ENCODE measurements at regions of chr13 and their contacts with region 1.

Region 1: GRCh38 chr13:28718543-28719226 is at the start of gene SLC46A3:
- DNase-seq: peak; percentile 98
- H3K4me3 ChIP-seq: peak within 1 kb of the TSS; percentile 78 to 89 (median 80)
- H3K4me3 Mint-ChIP-seq: peak within 1 kb of the TSS; percentile 87 to 98
- H3K27ac ChIP-seq: peak within 1 kb of the TSS; percentile 97 to 100
- H3K27ac Mint-ChIP-seq: peak within 1 kb of the TSS; percentile 91 to 98 (median 97)
- H3K4me1 ChIP-seq: peaks cover 24 to 27% of the 10 kb centered on the region in 2 donors
- H3K4me1 Mint-ChIP-seq: peaks cover 27% of the 10 kb centered on the region
- H3K27me3 ChIP-seq: no peaks in the 10 kb centered on the region
- H3K27me3 Mint-ChIP-seq: peaks cover 2 to 5% (median 3%) of the 10 kb centered on the region in 3 donors
- CTCF ChIP-seq: no peak
- polyA plus RNA-seq, gene SLC46A3: 8.2 to 21.1 (median 13.8) TPM

Region 2: GRCh38 chr13:28658796-28659620 is 59.7 kb before region 1 on chr13 and contains the start of gene POMP:
- intact Hi-C with region 1: loop called in 1 of 2 experiments (anchors 10 kb)
- DNase-seq: peak; percentile 81 to 89 (median 82)
- H3K4me3 ChIP-seq: peak within 1 kb of the TSS; percentile 96 to 98 (median 97)
- H3K4me3 Mint-ChIP-seq: peak within 1 kb of the TSS; percentile 96 to 97
- H3K27ac ChIP-seq: peak within 1 kb of the TSS; percentile 91 to 96
- H3K27ac Mint-ChIP-seq: peak within 1 kb of the TSS; percentile 97 to 99 (median 98)
- H3K4me1 ChIP-seq: peaks cover 32 to 34% of the 10 kb centered on the region in 2 donors
- H3K4me1 Mint-ChIP-seq: peaks cover 40% of the 10 kb centered on the region
- H3K27me3 ChIP-seq: no peaks in the 10 kb centered on the region
- H3K27me3 Mint-ChIP-seq: no peaks in the 10 kb centered on the region
- CTCF ChIP-seq: no peak
- polyA plus RNA-seq, gene POMP: 31.3 to 153 (median 145) TPM

Region 3: GRCh38 chr13:28671126-28671792 is 47.4 kb before region 1 on chr13:
- intact Hi-C with region 1: loop called in 1 of 2 experiments (anchors 5 kb)
- DNase-seq: peak; percentile 23 to 61 (median 38)
- H3K4me3 ChIP-seq: peak overlapping the region in 1 of 3 experiments; percentile 56
- H3K4me3 Mint-ChIP-seq: peak overlapping the region in 1 of 2 donors; percentile 59
- H3K27ac ChIP-seq: peak overlapping the region; percentile 55 to 75
- H3K27ac Mint-ChIP-seq: peak overlapping the region; percentile 82 to 96 (median 92)
- H3K4me1 ChIP-seq: peaks cover 32 to 41% of the 10 kb centered on the region in 2 donors
- H3K4me1 Mint-ChIP-seq: peaks cover 38% of the 10 kb centered on the region
- H3K27me3 ChIP-seq: no peaks in the 10 kb centered on the region
- H3K27me3 Mint-ChIP-seq: no peaks in the 10 kb centered on the region
- CTCF ChIP-seq: no peak